Transverse colon (tissue), 4 donors: ENCODE measurements at regions of chr10 and their contacts with region 1.

Region 1: DNA sequence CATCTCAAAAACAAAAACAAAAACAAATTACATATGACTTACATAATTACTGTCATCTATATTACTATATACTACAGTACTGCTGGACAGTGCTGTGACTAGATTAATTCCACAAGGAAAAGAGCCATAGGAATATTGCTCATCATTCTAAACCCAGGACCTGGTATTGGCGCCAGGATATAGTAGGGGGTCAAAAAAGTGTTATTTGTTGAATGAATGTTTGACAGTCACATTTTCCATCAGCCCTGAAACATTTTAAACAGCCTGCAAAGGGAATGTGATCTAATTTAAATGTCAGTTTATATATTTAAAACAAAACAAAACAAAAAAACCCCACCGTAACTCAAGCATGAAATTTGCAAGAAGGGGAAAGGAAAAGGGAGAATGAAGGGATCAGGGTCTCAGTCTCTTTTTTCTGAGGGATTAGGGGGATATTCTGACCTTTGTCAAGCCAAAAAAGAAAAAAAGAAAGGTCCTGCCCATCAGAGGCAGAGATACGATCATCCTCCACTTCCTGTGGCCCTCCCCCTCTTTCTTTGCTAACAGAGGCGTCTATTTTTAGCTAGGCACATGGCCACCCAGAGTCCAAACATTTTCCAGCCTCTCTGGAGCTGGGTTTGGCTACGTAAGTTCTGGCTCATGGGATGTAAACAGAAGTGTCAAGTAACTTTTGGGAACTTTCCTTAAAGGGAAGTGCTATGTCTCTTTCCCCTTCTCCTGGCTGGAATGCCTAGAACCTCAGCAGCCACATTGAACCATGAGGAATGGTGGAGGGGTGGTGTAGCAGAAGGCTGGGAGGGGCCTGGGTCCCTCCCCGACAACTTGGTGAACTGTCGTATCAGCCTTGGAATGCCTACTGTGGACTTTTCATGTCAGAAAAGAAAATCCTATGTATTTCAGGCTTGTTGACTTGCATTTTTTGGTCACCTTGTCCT is 44.6 kb upstream of the DLG5 start:
- DNase-seq: peak; percentile 65
- H3K4me3 ChIP-seq: no peak overlapping the region
- H3K27ac ChIP-seq: peak overlapping the region; percentile 75 to 81 (median 78)
- H3K4me1 ChIP-seq: peaks cover 0 to 25% (median 8%) of the 10 kb centered on the region in 4 donors
- H3K27me3 ChIP-seq: no peaks in the 10 kb centered on the region
- CTCF ChIP-seq: no peak
- EP300 ChIP-seq: peak; percentile 96
- POLR2A ChIP-seq: no peak

Region 2: DNA sequence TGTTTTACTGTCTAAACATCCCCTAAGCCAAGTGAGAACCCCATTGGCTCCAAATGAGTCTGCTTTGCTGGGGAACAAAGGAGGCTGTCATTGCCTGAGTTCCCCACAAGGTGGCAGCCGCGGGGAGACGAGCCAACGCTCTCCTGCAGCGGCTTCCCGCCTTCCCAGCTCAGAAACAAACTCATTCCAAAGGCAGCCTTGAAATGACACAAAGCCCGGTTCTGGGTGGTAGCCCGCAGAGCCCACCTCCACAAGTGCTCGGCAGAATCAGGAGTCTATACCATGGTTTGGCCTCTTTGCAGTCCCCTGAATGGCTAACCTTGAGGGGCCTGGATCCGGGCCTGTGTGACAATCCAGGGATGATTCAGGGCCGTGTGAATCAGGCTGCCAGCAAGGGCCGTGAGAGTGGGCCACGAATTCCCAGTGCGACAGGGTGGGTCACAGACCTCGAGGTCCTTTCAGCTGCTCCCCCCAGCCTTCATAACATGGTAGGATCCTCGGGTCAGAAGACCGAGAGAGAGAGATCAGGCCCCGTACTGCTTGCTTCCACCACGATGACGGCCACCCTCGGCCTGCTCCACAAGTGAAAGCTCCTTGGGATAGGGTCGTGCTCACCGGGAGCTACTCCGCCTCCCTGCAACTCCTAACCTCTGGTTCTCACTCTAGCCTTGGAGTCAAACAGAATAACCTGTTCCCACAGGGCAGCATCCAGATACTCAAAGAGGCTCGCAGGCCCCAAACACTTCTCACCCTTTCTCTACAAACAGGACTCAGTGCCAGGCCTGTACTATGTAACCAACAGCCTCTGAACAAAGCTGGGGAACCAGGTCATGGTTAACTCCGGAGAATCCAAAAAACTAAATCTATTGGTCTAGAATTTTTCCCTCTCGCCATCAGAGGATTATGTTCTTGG is 124.2 kb before region 1 on chr10:
- in situ Hi-C with region 1: loop called in 2 of 4 experiments (anchors 25 kb)
- intact Hi-C with region 1: loop called (anchors 5 kb)
- DNase-seq: peak; percentile 85
- H3K4me3 ChIP-seq: no peak overlapping the region
- H3K27ac ChIP-seq: peak overlapping the region; percentile 88 to 92 (median 90)
- H3K4me1 ChIP-seq: peaks cover 37 to 55% (median 43%) of the 10 kb centered on the region in 4 donors
- H3K27me3 ChIP-seq: no peaks in the 10 kb centered on the region
- CTCF ChIP-seq: peak; percentile 94 to 98 (median 97)
- EP300 ChIP-seq: no peak
- POLR2A ChIP-seq: no peak

Region 3: DNA sequence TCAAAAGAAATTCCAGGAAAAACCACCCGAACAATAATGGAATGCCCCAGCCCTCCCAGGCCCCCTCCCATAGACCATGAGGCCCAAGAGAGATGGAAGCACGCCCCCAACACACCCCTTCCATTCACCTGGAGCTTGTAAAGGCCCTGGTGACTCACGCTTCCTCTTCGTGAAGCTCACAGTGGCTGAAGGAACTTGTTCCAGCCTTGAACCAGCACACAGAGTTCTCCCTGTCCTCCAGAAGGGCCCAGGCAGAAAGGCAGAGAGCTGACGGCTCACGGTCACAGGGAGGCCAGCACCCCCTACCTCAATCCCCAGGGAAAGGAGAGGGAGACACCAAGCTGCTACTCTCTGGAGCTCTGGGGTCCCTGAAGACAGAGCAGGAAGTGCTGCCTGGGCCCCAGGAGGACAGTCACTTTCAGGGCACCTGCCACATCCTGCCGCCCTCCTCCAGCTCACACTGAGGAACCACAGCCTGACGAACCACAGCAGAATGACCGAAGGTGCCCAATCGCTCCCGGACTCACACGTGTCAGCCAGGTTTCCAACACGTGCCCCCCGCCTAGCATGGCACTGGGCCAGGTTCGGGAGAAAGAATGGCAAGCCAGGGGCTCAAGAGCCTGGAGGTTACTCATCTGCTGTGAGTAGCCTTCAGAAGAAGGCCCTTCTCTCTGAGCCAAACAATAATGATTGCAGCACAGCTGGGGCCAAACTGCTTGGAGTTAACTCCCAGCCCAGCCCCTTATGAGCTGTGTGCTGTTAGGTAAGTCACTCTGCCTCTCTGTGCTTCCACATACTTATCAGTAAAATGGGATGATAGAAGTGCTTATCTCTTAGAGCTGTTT is 97.4 kb before region 1 on chr10:
- in situ Hi-C with region 1: loop called in 1 of 4 experiments (anchors 25 kb)
- intact Hi-C with region 1: loop called (anchors 2 kb)
- DNase-seq: peak; percentile 55
- H3K4me3 ChIP-seq: no peak overlapping the region
- H3K27ac ChIP-seq: peak overlapping the region; percentile 75 to 82 (median 80)
- H3K4me1 ChIP-seq: peaks cover 22 to 43% (median 34%) of the 10 kb centered on the region in 4 donors
- H3K27me3 ChIP-seq: no peaks in the 10 kb centered on the region
- CTCF ChIP-seq: no peak
- EP300 ChIP-seq: peak; percentile 77
- POLR2A ChIP-seq: peak; percentile 19

Region 4: GRCh38 chr10:77926566-77927401 is 44.4 kb before region 1 on chr10 and contains the start of gene DLG5:
- in situ Hi-C with region 1: no loop called
- intact Hi-C with region 1: loop called (anchors 10 kb)
- DNase-seq: peak; percentile 75
- H3K4me3 ChIP-seq: peak within 1 kb of the TSS; percentile 60 to 85 (median 80)
- H3K27ac ChIP-seq: peak within 1 kb of the TSS; percentile 81 to 90 (median 84)
- H3K4me1 ChIP-seq: peaks cover 10 to 33% (median 22%) of the 10 kb centered on the region in 4 donors
- H3K27me3 ChIP-seq: peaks cover 8% of the 10 kb centered on the region
- CTCF ChIP-seq: peak in 1 of 5 experiments; percentile 3
- EP300 ChIP-seq: no peak
- POLR2A ChIP-seq: no peak
- total RNA-seq, gene DLG5: 31.4 to 90.1 (median 44.6) TPM